Activated CD8-positive, alpha-beta T cell treated with anti-CD3 and anti-CD28 coated beads, Interleukin-2, amount 10 ng/mL, durations not matched to agents 7 days and 5 days (primary cell): ENCODE measurements at regions of chr7 and their contacts with region 1.

Region 1: DNA sequence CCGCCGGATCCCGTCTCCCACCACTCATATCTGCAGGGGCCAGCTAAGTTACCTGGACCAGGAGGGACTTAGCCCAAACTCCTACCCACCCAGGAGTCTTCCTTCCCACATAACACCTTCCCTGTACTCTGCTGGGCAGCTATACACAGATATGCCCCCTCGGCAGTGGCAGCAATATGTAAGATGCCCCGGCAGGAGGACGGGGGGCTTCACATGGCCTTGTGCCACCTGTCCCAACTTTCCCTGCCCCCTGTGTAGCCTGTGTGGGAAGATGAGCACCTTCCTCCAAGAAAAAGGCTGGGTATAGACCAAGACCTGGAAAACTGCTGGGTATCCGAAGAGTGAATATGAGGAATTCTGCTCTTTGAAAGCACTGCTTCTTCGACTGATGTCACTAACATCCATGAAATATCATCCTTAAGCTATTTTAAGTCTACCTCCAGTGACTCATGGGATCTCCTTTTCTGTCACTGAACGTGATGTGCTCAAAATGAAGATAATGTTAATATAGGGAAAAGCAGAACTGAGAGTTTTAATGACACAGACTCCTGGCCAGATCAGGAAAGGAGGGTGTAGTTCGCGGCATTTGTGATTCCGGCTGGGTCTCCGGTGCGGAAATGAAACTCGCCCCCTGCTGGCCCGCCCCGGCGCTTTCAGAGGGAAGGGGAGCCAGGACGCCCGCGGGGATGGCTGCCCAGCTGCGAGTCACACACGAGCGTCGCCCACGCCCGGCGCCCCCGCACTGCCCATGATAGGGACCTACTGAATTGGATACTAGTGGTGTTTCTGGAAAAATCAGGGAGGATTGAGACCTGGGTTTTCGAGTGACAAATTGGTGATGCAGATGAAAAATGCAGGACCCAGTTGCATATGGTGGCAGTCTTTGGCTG is 256.9 kb upstream of the NFE2L3 start:
- DNase-seq: peak; percentile 65
- ATAC-seq: peak; percentile 77
- H3K4me3 Mint-ChIP-seq: peak overlapping the region; percentile 24
- H3K27ac Mint-ChIP-seq: no peak overlapping the region
- H3K4me1 Mint-ChIP-seq: peaks cover 35% of the 10 kb centered on the region
- H3K27me3 Mint-ChIP-seq: peaks cover 26% of the 10 kb centered on the region

Region 2: DNA sequence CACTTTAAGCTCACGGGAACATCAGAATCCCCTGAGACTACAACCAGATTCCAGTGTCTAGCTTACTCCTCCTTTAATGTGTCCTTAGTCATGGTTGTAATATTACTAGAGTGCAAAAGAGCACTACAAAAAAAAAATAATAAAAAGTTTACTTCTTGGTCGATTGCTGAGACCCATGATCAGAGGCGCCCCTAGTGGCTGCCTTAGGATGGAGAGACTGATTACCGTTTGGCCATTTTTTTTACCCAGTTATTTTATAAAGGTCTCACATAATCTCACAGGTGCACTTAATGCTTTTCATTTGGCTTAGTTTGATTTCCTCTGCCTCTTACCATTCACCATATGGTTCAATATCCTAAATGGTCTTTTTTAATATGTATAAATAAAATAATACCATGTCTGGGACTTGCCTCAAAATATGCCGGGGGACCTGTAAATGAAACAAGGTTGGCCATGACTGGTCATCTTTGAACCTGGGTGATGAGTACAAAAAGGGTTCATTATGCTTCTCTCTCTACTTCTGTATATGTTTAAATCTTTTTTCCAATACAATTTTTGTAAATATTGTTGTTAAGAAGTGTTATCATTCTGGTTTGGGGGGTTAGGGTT is 74.6 kb before region 1 on chr7:
- CTCF ChIA-PET with region 1: no interaction called
- POLR2A ChIA-PET with region 1: no interaction called
- DNase-seq: no peak
- ATAC-seq: no peak
- H3K4me3 Mint-ChIP-seq: no peak overlapping the region
- H3K27ac Mint-ChIP-seq: no peak overlapping the region
- H3K4me1 Mint-ChIP-seq: no peaks in the 10 kb centered on the region
- H3K27me3 Mint-ChIP-seq: peaks cover 21% of the 10 kb centered on the region

Region 3: DNA sequence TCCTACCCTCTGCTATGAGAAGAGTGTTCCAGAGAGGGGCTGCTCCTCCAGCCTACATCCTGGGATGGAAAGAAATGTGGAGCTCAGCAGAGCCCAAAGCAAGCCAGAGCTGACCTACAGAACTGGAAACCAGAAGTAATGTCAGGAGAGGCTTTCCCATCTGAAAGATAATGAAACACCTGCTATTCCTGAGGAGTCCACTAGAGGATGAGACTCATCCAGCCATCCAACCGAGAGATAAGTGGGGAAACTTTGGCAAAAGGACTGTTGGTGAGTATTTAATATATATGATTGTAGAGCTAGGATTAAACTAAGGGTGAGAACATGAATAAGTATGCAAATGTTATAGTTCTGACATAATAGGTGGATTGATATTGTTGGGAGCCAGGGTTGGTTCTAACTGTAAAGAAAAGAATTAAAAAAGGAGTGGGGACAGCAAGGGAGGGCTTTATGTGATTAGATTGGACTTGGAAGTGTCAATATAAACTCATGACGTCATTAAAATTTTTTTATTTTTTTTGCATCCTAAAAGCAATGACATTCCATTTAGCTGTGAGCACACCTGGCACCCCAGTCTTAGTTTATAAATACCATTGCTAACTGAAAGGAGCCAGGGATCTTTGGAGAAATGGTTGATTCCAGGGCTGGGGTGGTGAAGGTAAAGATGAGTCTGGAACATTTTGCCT is 55.9 kb before region 1 on chr7:
- CTCF ChIA-PET with region 1: no interaction called
- POLR2A ChIA-PET with region 1: no interaction called
- DNase-seq: no peak
- ATAC-seq: no peak
- H3K4me3 Mint-ChIP-seq: no peak overlapping the region
- H3K27ac Mint-ChIP-seq: no peak overlapping the region
- H3K4me1 Mint-ChIP-seq: no peaks in the 10 kb centered on the region
- H3K27me3 Mint-ChIP-seq: peaks cover 18% of the 10 kb centered on the region

Region 4: GRCh38 chr7:25908154-25908949 is 13.2 kb after region 1 on chr7:
- CTCF ChIA-PET with region 1: interaction called, 31 read pairs
- POLR2A ChIA-PET with region 1: no interaction called
- DNase-seq: no peak
- ATAC-seq: no peak
- H3K4me3 Mint-ChIP-seq: no peak overlapping the region
- H3K27ac Mint-ChIP-seq: no peak overlapping the region
- H3K4me1 Mint-ChIP-seq: peaks cover 3% of the 10 kb centered on the region
- H3K27me3 Mint-ChIP-seq: peaks cover 3% of the 10 kb centered on the region

Region 5: GRCh38 chr7:26078437-26079336 is 183.5 kb after region 1 on chr7:
- CTCF ChIA-PET with region 1: interaction called, 20 read pairs
- POLR2A ChIA-PET with region 1: no interaction called
- DNase-seq: peak; percentile 85
- ATAC-seq: peak; percentile 100
- H3K4me3 Mint-ChIP-seq: peak overlapping the region; percentile 19
- H3K27ac Mint-ChIP-seq: no peak overlapping the region
- H3K4me1 Mint-ChIP-seq: peaks cover 11% of the 10 kb centered on the region
- H3K27me3 Mint-ChIP-seq: peaks cover 44% of the 10 kb centered on the region

Region 6: DNA sequence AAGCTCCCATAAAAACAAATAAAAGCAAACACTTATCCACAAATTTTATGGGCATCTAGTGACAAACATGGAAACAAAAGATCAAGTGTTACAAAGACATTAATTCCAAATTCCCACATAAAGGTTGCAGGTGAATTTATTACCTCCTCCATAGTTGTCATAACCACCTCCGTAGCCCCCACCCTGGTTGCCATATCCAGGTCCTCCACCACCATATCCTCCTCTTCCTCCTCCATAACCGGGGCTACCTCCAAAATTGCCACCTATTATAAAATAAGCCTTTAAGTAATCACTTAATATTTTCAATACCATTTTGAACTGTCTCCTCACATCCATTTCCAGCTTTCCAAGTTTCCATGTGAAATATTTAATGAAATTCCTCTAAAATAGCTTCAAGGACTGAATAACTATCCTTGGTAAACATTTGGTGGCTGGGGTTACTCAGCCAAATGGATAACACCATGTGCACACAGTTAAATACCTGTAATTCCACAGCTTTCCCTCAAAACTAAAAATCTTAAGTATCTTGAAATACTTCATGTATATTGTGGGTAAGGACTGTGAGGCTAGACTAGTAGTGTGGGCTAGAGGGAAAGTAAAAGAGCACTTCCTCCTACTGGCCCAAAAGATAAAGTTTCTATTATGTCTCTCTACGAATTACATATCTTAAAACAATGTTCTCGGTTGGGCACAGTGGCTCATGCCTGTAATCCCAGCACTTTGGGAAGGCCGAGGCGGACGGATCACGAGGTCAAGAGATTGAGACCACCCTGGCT is 298.5 kb after region 1 on chr7:
- CTCF ChIA-PET with region 1: interaction called, 18 read pairs
- POLR2A ChIA-PET with region 1: interaction called, 13 read pairs
- DNase-seq: no peak
- ATAC-seq: peak; percentile 6
- H3K4me3 Mint-ChIP-seq: peak overlapping the region; percentile 100
- H3K27ac Mint-ChIP-seq: peak overlapping the region; percentile 86
- H3K4me1 Mint-ChIP-seq: peaks cover 78% of the 10 kb centered on the region
- H3K27me3 Mint-ChIP-seq: no peaks in the 10 kb centered on the region

Region 7: DNA sequence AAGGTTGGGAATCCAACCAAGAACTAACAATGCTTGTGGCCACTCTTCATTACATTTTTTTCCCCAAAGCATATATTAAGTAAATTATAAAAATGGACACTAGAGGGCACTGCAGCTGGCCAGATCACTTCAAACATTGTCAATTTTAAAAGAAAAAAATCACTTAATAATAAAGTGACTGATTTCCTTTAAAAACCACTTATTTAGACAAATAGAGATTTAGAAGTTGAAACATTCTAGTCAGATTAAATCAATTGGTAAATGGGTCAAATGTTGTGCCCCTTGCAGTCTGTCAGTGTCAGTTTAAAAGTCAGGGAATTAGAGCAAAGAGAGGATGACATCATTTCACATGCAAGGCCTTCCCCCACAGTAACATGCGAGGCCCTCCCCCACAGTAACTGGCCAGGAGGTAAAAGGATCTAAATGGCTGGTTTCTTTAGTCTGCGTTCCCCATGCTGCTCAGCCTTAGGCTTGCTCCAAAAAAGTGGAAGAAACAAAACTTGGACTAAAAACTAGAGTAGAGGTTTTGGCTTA is 791.4 kb after region 1 on chr7:
- CTCF ChIA-PET with region 1: interaction called, 18 read pairs
- POLR2A ChIA-PET with region 1: interaction called, 4 read pairs
- DNase-seq: no peak
- ATAC-seq: peak; percentile 33
- H3K4me3 Mint-ChIP-seq: no peak overlapping the region
- H3K27ac Mint-ChIP-seq: no peak overlapping the region
- H3K4me1 Mint-ChIP-seq: peaks cover 2% of the 10 kb centered on the region
- H3K27me3 Mint-ChIP-seq: peaks cover 25% of the 10 kb centered on the region